ENCODE measurements at regions of chr12 and their contacts with region 1.

Region 1: GRCh38 chr12:50025187-50026059 is at the start of gene RACGAP1:
- DNase-seq: peak; percentile 98
- H3K4me3 Mint-ChIP-seq: peak within 1 kb of the TSS; percentile 98
- H3K27ac Mint-ChIP-seq: peak within 1 kb of the TSS; percentile 99
- H3K4me1 Mint-ChIP-seq: peaks cover 46% of the 10 kb centered on the region
- H3K27me3 Mint-ChIP-seq: peaks cover 3% of the 10 kb centered on the region
- total RNA-seq, gene RACGAP1: 68.1 and 71.2 TPM in 2 replicates

Region 2: GRCh38 chr12:49842519-49843352 is 182.7 kb before region 1 on chr12 and contains the start of gene BCDIN3D:
- intact Hi-C with region 1: loop called (anchors 2 kb)
- DNase-seq: peak; percentile 91
- H3K4me3 Mint-ChIP-seq: peak within 1 kb of the TSS; percentile 91
- H3K27ac Mint-ChIP-seq: peak within 1 kb of the TSS; percentile 84
- H3K4me1 Mint-ChIP-seq: peaks cover 29% of the 10 kb centered on the region
- H3K27me3 Mint-ChIP-seq: peaks cover 1% of the 10 kb centered on the region
- total RNA-seq, gene BCDIN3D: 3.6 and 4.0 TPM in 2 replicates

Region 3: GRCh38 chr12:50043854-50044253 is 18.4 kb after region 1 on chr12:
- intact Hi-C with region 1: loop called (anchors 1 kb)
- DNase-seq: no peak
- H3K4me3 Mint-ChIP-seq: no peak overlapping the region
- H3K27ac Mint-ChIP-seq: no peak overlapping the region
- H3K4me1 Mint-ChIP-seq: peaks cover 37% of the 10 kb centered on the region
- H3K27me3 Mint-ChIP-seq: peaks cover 11% of the 10 kb centered on the region

Region 4: DNA sequence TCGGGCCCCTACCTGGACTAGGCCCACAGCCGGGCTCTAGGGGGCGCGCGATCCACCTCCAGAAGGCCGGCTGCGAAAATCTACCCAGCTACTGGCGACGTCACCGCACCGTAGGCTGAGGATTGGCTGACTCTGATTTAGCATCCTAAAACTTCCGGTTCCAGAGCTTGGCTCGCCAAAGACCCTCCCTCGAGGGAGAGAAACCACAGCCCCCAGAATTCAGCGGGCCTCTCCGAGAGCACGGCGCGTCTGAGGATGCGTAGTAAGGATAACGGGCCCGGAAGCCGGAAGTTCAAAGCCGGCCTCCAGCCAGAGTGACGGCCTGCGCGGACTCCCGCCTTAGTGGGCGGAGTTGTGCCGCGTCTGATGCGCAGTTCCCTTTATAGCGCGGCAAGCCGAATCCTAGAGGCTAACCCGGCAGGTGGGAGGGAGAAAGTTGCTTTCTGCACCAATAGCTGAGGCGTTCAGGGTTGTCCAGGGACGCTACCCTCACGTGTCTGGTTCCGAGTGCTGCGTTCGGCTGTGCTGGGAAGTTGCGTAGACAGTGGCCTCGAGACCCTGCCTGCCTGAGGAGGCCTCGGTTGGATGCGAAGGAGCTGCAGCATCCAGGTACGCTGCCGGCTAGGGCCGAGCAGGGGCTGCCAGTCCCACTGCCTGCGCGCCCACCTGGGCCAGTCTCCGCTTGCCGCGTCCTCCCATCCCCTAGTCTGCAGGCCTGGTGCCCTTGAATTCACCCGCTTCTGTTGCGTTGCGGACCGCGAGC is 86.5 kb after region 1 on chr12 and contains the start of gene COX14:
- intact Hi-C with region 1: loop called (anchors 1 kb)
- DNase-seq: peak; percentile 98
- H3K4me3 Mint-ChIP-seq: peak within 1 kb of the TSS; percentile 94
- H3K27ac Mint-ChIP-seq: peak within 1 kb of the TSS; percentile 94
- H3K4me1 Mint-ChIP-seq: peaks cover 42% of the 10 kb centered on the region
- H3K27me3 Mint-ChIP-seq: no peaks in the 10 kb centered on the region
- total RNA-seq, gene COX14: 44.3 and 45.6 TPM in 2 replicates

Region 5: DNA sequence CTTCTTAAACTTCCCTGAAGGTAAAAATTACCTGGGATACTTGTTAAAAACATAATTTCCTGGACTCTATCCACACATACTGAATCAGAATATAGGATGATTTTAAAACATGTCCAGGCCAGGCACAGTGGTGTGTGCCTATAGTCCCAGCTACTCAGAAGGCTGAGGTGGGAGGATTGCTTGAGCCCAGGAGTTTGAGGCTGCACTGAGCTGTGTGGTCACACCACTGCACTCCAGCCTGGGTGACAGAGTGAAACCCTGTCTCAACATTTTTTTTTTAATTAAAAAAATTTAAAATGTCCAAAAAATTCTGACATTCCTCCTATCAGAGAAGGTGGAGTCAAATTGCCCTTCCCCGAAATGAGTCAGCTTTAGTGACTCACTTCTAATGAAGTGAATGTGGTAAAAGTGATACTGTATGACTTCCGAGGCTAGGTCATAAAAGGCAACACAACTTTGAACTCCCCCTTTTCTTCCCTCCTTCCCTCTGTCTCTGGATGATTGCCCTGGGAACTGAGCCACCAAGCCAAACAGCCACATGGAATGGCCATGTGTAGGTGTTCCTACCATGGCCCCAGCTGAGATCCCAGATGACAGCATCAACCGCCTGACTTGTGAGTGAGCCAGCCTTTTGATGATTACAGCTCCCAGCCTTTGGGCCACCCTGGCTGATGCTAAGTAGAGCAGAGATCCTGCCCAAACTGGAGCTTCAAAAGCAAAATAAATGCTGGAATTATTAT is 221.6 kb after region 1 on chr12:
- intact Hi-C with region 1: loop called (anchors 1 kb)
- DNase-seq: peak; percentile 2
- H3K4me3 Mint-ChIP-seq: peak overlapping the region; percentile 79
- H3K27ac Mint-ChIP-seq: peak overlapping the region; percentile 90
- H3K4me1 Mint-ChIP-seq: peaks cover 38% of the 10 kb centered on the region
- H3K27me3 Mint-ChIP-seq: peaks cover 1% of the 10 kb centered on the region

Region 6: DNA sequence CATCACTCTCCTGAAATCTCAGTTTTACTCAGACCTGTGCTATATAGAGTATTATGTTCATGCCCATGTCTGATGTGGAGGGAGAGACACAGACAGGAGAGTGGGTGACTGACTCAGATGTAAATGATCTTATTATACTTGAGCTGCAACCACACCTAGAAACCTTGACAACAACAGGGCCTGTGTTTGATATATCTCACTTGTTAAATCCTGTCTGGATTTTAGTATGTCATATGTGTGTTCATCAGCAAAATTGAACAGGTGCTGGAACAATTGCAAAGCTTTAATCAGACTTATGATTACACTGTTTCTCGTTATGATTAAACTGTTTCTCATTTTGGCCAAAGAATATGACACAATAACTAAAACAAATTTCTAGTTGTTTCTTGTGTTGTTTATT is 517.0 kb after region 1 on chr12:
- intact Hi-C with region 1: no loop called
- DNase-seq: no peak
- H3K4me3 Mint-ChIP-seq: no peak overlapping the region
- H3K27ac Mint-ChIP-seq: peak overlapping the region; percentile 84
- H3K4me1 Mint-ChIP-seq: peaks cover 28% of the 10 kb centered on the region
- H3K27me3 Mint-ChIP-seq: no peaks in the 10 kb centered on the region